Activated CD4-positive, alpha-beta memory T cell treated with anti-CD3 and anti-CD28 coated beads for 36 hours (primary cell): ENCODE measurements at regions of chr13 and their contacts with region 1.

Region 1: DNA sequence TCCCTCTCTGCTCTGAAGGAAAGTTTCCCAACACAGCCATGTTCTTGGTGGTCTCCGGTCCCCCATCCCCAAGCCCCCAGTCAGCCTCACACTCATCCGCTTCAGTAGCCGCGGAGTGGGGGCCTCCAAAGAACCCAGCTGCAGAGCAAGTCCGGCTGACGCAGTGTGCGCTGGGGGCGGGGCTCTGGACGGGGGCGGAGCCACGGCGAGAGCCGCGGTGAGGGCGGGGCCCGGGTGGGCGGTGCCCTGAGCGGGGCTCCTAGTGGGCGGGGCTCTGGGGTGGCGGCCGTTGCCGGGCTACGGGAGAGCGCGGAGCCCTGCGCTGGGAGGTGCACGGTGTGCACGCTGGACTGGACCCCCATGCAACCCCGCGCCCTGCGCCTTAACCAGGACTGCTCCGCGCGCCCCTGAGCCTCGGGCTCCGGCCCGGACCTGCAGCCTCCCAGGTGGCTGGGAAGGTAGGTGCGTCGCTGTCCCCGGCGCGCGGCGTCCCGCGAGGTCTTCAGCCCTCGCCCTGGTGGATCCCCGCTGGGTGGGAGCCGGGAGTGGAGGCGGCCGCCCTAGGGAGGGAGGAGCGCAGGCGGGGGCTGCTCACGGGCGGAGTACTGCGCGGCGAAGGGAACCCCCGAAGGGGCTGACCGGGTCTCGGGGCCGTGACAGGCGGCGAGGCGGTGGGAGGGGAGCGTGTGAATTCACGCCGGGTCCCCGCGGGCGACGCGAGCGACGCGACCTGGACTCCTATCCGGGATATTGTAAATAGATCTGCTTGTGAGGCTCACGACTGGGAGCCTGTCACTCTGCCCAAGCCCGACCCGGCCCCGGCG is 9.1 kb downstream of the TNFRSF19 start:
- DNase-seq: peak; percentile 94
- H3K4me3 Mint-ChIP-seq: peak overlapping the region; percentile 75
- H3K27ac Mint-ChIP-seq: no peak overlapping the region
- H3K4me1 Mint-ChIP-seq: peaks cover 14% of the 10 kb centered on the region
- H3K27me3 Mint-ChIP-seq: peaks cover 33% of the 10 kb centered on the region

Region 2: DNA sequence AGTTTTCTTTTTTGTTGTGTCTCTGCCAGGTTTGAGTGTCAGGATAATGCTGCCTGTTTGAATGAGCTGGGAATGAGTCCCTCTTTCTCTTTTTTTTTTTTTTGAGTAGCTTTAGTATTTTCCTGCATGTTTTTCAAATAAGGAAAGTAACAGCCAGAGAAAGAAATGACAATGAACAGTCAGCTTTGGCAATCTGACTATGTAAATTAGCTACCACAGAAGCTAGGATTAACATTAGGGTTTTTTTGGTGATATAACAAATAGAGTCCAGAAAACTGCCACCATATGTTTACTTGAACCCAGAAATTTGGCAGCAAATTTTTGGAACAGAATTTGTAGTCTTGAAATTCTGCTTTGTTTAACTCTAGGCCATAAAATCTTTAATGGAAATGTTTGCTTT is 348.0 kb before region 1 on chr13:
- CTCF ChIA-PET with region 1: no interaction called
- POLR2A ChIA-PET with region 1: no interaction called
- intact Hi-C with region 1: no loop called
- DNase-seq: no peak
- H3K4me3 Mint-ChIP-seq: no peak overlapping the region
- H3K27ac Mint-ChIP-seq: no peak overlapping the region
- H3K4me1 Mint-ChIP-seq: no peaks in the 10 kb centered on the region
- H3K27me3 Mint-ChIP-seq: peaks cover 15% of the 10 kb centered on the region

Region 3: GRCh38 chr13:23375001-23375971 is 204.0 kb before region 1 on chr13:
- CTCF ChIA-PET with region 1: no interaction called
- POLR2A ChIA-PET with region 1: no interaction called
- intact Hi-C with region 1: loop called (anchors 5 kb)
- DNase-seq: peak; percentile 98
- H3K4me3 Mint-ChIP-seq: peak overlapping the region; percentile 73
- H3K27ac Mint-ChIP-seq: no peak overlapping the region
- H3K4me1 Mint-ChIP-seq: peaks cover 69% of the 10 kb centered on the region
- H3K27me3 Mint-ChIP-seq: no peaks in the 10 kb centered on the region

Region 4: DNA sequence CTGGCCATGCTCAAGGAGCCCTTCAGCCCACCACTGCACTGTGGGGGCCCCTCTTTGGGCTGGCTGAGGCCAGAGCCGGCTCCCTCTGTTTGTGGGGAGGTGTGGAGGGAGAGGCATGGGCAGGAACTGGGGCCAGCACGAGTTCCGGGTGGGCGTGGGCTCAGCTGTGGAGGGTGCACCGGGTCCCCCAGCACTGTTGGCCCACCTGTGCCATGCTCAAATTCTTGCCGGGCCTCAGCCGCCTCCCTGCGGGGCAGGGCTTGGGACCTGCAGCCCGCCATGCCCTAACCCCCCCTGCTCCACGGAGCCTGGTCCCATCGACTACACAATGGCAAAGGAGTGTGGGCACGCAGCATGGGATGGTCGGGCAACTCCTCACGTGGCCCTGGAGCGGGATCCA is 47.8 kb before region 1 on chr13:
- CTCF ChIA-PET with region 1: no interaction called
- POLR2A ChIA-PET with region 1: no interaction called
- intact Hi-C with region 1: no loop called
- DNase-seq: no peak
- H3K4me3 Mint-ChIP-seq: no peak overlapping the region
- H3K27ac Mint-ChIP-seq: no peak overlapping the region
- H3K4me1 Mint-ChIP-seq: no peaks in the 10 kb centered on the region
- H3K27me3 Mint-ChIP-seq: peaks cover 3% of the 10 kb centered on the region

Region 5: GRCh38 chr13:23558675-23559536 is 20.4 kb before region 1 on chr13:
- CTCF ChIA-PET with region 1: no interaction called
- POLR2A ChIA-PET with region 1: no interaction called
- intact Hi-C with region 1: loop called (anchors 1 kb)
- DNase-seq: peak; percentile 29
- H3K4me3 Mint-ChIP-seq: no peak overlapping the region
- H3K27ac Mint-ChIP-seq: no peak overlapping the region
- H3K4me1 Mint-ChIP-seq: no peaks in the 10 kb centered on the region
- H3K27me3 Mint-ChIP-seq: peaks cover 15% of the 10 kb centered on the region

Region 6: DNA sequence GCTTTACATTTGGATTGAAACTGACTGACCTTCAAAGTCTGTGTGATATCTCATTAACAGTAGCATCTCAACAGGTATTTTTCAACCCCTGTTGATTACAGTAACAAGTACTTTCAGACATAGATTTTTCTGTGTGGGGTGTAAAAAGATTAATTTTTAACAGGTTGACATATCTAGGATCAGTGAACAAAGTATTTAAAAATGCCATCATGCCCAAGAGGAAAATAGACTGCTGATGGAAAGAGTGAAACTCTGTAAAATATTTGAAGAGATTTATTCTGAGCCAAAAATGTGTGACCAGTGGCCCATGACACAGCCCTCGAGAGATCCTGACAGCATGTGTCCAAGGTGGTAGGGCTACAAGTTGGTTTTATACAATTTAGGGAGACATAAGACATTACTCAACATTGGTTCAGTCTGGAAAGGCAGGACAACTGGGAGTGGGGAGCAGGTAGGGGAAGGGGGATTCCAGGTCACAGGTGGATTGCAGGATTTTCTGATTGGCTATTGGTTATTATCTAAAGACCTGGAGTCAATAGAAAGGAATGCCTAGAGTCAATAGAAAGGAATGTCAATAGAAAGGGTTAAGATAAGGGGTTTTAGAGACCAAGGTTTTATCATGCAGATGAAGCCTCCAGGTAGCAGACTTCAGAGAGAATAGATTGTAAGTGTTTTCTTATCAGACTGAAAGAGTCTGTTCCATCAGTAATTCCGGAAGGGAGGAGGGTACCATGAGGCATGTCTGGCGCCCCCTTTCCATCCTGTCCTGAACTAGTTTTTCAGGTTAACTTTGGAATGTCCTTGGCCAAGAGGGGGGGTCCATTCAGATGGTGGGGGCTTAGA is 20.0 kb after region 1 on chr13:
- CTCF ChIA-PET with region 1: no interaction called
- POLR2A ChIA-PET with region 1: no interaction called
- intact Hi-C with region 1: no loop called
- DNase-seq: no peak
- H3K4me3 Mint-ChIP-seq: no peak overlapping the region
- H3K27ac Mint-ChIP-seq: no peak overlapping the region
- H3K4me1 Mint-ChIP-seq: no peaks in the 10 kb centered on the region
- H3K27me3 Mint-ChIP-seq: peaks cover 39% of the 10 kb centered on the region

Region 7: GRCh38 chr13:23741879-23742510 is 162.7 kb after region 1 on chr13:
- CTCF ChIA-PET with region 1: no interaction called
- POLR2A ChIA-PET with region 1: no interaction called
- intact Hi-C with region 1: loop called (anchors 5 kb)
- DNase-seq: no peak
- H3K4me3 Mint-ChIP-seq: no peak overlapping the region
- H3K27ac Mint-ChIP-seq: no peak overlapping the region
- H3K4me1 Mint-ChIP-seq: peaks cover 25% of the 10 kb centered on the region
- H3K27me3 Mint-ChIP-seq: peaks cover 3% of the 10 kb centered on the region

Region 8: GRCh38 chr13:23871616-23872220 is 292.4 kb after region 1 on chr13:
- CTCF ChIA-PET with region 1: interaction called, 3 read pairs
- POLR2A ChIA-PET with region 1: no interaction called
- intact Hi-C with region 1: loop called (anchors 5 kb)
- DNase-seq: no peak
- H3K4me3 Mint-ChIP-seq: no peak overlapping the region
- H3K27ac Mint-ChIP-seq: no peak overlapping the region
- H3K4me1 Mint-ChIP-seq: no peaks in the 10 kb centered on the region
- H3K27me3 Mint-ChIP-seq: no peaks in the 10 kb centered on the region